ENCODE measurements at regions of chr12 and their contacts with region 1.

Region 1: GRCh38 chr12:2998789-2999264 is 39.6 kb downstream of the TEAD4 start:
- DNase-seq: peak; percentile 77
- ATAC-seq: peak; percentile 94 to 97

Region 2: GRCh38 chr12:2959505-2960389 is 39.1 kb before region 1 on chr12:
- intact Hi-C with region 1: loop called in 1 of 2 experiments (anchors 5 kb)
- DNase-seq: peak; percentile 80
- ATAC-seq: peak; percentile 59 to 68

Region 3: DNA sequence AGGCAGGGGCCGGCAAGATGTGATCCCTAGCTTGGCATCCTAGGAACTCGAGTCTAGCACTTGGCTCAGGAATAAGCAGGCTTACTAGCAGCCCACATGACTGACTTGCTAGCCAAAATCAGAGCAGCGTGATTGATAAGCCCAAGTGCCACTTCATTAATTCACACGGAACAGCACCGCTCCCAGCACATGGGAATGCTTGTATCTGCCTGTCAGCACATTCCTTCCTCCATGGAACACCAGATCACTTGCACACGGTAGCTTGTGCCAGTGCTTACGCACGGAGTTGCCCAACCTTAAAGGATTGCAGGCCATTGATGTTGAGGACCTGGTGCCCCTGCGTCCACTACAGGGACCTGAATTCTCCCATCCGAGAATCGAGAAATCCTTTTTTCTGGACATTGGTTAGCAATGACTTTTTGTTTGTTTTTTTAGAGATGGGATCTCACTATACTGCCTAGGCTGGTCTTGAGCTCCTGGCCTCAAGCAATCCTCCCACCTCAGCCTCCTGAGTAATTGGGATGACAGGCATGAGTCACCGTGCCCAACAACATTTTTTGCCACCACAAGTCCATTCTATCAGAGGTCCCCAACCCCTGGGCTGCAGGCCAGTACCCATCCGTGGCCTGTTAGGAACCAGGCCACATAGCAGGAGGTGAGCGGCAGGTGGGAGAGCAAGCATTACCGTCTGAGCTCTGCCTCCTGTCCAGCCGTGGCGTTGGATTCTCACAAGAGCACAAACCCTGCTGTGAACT is 47.8 kb after region 1 on chr12:
- intact Hi-C with region 1: no loop called
- DNase-seq: peak; percentile 71
- ATAC-seq: peak; percentile 74 to 79

Region 4: DNA sequence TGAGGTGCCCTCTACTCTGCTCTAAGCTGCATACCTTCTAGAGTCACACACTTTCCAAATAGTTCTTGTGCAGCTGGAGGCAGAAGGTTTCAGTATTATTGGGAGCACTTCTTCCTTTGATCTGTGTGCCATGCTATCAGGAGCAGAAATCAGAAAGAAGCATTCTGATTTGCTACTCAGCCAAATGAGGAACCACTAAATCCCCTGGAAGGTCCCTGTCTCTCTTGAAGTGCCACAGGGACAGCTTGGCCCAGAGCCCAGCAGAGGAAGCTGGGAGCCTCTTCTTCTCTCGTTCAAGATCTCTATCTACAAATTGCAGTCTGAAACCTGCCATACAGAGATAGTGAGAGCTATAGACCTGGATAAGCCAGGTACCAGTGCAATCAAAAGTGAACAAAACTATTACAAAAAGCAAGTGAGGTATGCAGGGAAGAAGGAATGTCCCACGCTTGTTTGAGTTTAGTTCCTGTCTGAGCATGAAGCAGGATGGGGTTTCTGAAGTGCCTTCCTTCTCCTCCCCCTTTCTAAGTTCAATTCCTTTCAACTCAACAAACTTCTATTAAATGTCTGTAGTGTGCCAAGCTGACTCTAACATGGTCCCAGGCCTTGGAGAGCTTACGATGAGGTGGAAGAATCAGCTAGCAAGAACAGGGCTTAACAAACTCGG is 975.3 kb after region 1 on chr12:
- intact Hi-C with region 1: no loop called
- DNase-seq: no peak
- ATAC-seq: no peak